ENCODE measurements at regions of chr3 and their contacts with region 1.

Region 1: DNA sequence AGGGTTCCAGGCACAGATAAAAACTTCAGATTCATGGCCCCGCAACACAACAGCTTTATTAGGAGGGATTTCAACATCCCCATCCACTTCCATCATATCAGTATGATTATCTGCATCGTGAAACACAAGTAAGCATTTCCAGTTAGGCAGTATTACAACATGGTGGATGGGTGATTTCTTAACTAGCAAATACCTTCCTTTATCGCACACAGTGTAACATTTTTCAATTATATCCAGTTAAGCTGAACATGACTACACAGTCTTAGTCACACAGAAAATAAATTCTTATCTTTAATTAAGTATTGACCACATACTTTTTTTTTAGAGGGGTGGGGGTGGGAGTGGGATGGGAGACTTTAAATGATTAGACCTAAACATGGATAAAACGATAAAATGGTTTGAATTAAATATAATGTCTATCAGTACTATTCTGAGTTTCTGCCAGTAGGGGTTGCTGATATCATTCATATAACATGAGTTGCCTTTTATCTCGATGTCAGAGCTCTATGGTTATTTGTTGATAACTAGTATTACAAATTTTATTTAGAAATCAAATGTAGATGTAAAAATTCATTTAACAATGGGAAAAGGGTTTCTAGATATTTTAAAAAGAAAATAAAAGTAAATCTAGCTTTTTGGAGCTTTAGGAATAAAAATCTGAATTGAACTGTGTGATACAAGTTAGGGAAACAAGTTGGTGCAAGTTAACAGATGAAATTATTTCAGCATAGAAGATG is 146.6 kb downstream of the TBL1XR1 start:
- DNase-seq: no peak
- H3K4me3 ChIP-seq: no peak overlapping the region
- H3K27ac ChIP-seq: no peak overlapping the region
- H3K4me1 ChIP-seq: peaks cover 15% of the 10 kb centered on the region
- H3K27me3 ChIP-seq: no peaks in the 10 kb centered on the region
- CTCF ChIP-seq: peak in 2 of 3 experiments; percentile 26 to 69
- POLR2A ChIP-seq: no peak

Region 2: GRCh38 chr3:177729956-177730681 is 679.5 kb after region 1 on chr3:
- intact Hi-C with region 1: loop called (anchors 5 kb)
- DNase-seq: no peak
- H3K4me3 ChIP-seq: no peak overlapping the region
- H3K27ac ChIP-seq: peak overlapping the region; percentile 53
- H3K4me1 ChIP-seq: peaks cover 19% of the 10 kb centered on the region
- H3K27me3 ChIP-seq: no peaks in the 10 kb centered on the region
- CTCF ChIP-seq: no peak
- POLR2A ChIP-seq: no peak

Region 3: DNA sequence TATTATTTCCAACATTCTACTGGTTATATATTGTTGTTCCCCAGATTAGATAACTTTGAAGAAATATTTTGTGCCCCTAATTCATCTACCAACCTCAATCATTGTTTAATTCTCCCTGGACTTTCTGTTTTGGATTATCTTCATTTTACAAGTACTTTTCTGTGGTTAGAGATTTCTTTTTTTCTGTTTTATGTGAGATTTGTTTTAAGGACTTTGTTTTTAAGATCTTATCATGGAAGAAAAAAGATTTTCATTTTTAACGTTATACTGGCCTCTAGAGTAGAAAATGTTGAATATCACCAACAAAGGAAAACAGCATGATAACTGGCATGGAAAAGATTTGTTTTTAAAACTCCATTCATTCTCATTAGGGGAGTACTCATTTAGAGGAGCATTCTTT is 1274.7 kb after region 1 on chr3:
- intact Hi-C with region 1: loop called (anchors 10 kb)
- DNase-seq: no peak
- H3K4me3 ChIP-seq: no peak overlapping the region
- H3K27ac ChIP-seq: no peak overlapping the region
- H3K4me1 ChIP-seq: peaks cover 9% of the 10 kb centered on the region
- H3K27me3 ChIP-seq: no peaks in the 10 kb centered on the region
- CTCF ChIP-seq: peak; percentile 15 to 41 (median 30)
- POLR2A ChIP-seq: no peak

Region 4: GRCh38 chr3:178385280-178385952 is 1334.7 kb after region 1 on chr3:
- intact Hi-C with region 1: loop called (anchors 10 kb)
- DNase-seq: no peak
- H3K4me3 ChIP-seq: no peak overlapping the region
- H3K27ac ChIP-seq: no peak overlapping the region
- H3K4me1 ChIP-seq: peaks cover 29% of the 10 kb centered on the region
- H3K27me3 ChIP-seq: no peaks in the 10 kb centered on the region
- CTCF ChIP-seq: peak; percentile 64 to 86 (median 65)
- POLR2A ChIP-seq: no peak